Left lung (tissue), 14 donors: ENCODE measurements at regions of chr2 and their contacts with region 1.

Region 1: DNA sequence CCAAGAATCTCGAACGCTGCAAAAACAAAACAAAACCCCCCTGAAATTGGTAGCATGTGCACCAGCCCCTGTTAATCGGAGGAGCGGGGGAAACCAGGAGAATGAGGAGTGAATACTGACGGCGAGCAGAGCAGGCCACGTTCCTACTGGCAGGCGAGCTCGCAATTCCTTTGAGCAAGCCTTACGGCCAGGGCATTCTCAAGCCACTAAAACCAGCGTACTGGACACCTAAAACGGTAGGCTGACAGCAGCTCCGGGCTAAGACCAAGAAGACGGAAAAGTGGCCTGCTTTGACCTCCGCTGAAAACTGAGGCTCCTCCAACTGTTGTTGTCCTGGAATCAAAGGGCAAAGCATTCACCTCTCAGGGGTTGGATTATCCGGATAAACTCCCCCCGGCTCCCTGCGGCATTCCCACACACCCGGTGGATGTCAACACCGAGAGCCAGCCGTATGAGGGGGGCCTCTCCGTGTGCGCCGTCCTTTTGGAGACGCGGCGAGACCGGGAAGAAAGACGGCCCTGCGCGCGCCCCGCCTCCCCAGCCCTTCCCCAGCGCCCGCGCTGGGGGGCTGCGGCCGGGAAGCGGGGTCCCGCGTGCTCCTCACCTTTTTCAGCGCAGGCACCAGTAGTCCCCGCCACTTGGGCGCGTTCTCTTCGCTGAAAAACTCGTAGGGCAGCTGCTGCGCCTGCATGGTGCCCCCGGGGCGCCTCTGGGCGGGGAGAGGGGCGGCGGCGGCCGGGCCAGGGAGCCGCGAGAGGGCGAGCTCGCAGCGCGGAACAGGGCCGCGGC is 925 bp downstream of the SOS1 start:
- DNase-seq: peak; percentile 63 to 90 (median 68)
- ATAC-seq: peak; percentile 55
- H3K4me3 ChIP-seq: peak overlapping the region; percentile 81 to 89
- H3K27ac ChIP-seq: peak overlapping the region; percentile 96 to 97
- H3K4me1 ChIP-seq: peaks cover 17 to 55% of the 10 kb centered on the region in 2 donors
- H3K27me3 ChIP-seq: no peaks in the 10 kb centered on the region
- CTCF ChIP-seq: peak in 1 of 2 donors; percentile 14

Region 2: GRCh38 chr2:38892819-38893218 is 227.1 kb before region 1 on chr2:
- intact Hi-C with region 1: no loop called
- DNase-seq: no peak
- ATAC-seq: no peak
- H3K4me3 ChIP-seq: no peak overlapping the region
- H3K27ac ChIP-seq: no peak overlapping the region
- H3K4me1 ChIP-seq: no peaks in the 10 kb centered on the region
- H3K27me3 ChIP-seq: no peaks in the 10 kb centered on the region
- CTCF ChIP-seq: no peak

Region 3: GRCh38 chr2:38925982-38926381 is 193.9 kb before region 1 on chr2:
- intact Hi-C with region 1: no loop called
- DNase-seq: no peak
- ATAC-seq: no peak
- H3K4me3 ChIP-seq: no peak overlapping the region
- H3K27ac ChIP-seq: no peak overlapping the region
- H3K4me1 ChIP-seq: no peaks in the 10 kb centered on the region
- H3K27me3 ChIP-seq: no peaks in the 10 kb centered on the region
- CTCF ChIP-seq: no peak

Region 4: DNA sequence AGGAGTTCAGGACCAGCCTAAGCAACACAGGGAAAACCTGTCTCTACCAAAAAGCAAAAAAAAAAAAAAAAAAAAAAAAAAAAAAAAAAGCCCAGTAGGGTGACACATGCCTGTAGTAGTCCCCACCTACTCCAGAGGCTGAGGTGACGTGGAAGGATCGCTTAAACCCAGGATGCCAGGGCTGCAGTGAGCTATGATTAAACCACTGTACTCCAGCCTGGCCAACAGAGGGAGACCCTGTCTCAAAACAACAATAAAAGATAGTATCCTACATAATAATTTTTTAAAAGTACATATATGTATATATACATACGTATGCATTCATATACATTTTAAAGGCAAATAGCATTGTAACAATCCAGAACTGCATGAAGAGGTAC is 50.8 kb before region 1 on chr2:
- intact Hi-C with region 1: loop called in 1 of 2 experiments (anchors 10 kb)
- DNase-seq: no peak
- ATAC-seq: no peak
- H3K4me3 ChIP-seq: no peak overlapping the region
- H3K27ac ChIP-seq: no peak overlapping the region
- H3K4me1 ChIP-seq: no peaks in the 10 kb centered on the region
- H3K27me3 ChIP-seq: no peaks in the 10 kb centered on the region
- CTCF ChIP-seq: no peak